PC-9 (cell line): ENCODE measurements at regions of chr7 and their contacts with region 1.

Region 1: GRCh38 chr7:84688671-84689070 is 494.1 kb upstream of the SEMA3A start:
- DNase-seq: no peak
- H3K4me3 ChIP-seq: no peak overlapping the region
- H3K27ac ChIP-seq: no peak overlapping the region
- H3K4me1 ChIP-seq: 0 out of 2 replicates have a peak, but pooled peaks cover 17% of the 10 kb centered on the region
- H3K27me3 ChIP-seq: no peaks in the 10 kb centered on the region
- CTCF ChIP-seq: no peak

Region 2: GRCh38 chr7:84701524-84702306 is 13.0 kb after region 1 on chr7:
- CTCF ChIA-PET with region 1: interaction called, 11 read pairs
- POLR2A ChIA-PET with region 1: no interaction called
- intact Hi-C with region 1: no loop called
- DNase-seq: peak in 1 of 2 experiments; percentile 69
- H3K4me3 ChIP-seq: no peak overlapping the region
- H3K27ac ChIP-seq: no peak overlapping the region
- H3K4me1 ChIP-seq: no peaks in the 10 kb centered on the region
- H3K27me3 ChIP-seq: no peaks in the 10 kb centered on the region
- CTCF ChIP-seq: no peak